AG04449 (cell line): ENCODE measurements at regions of chr1 and their contacts with region 1.

Region 1: DNA sequence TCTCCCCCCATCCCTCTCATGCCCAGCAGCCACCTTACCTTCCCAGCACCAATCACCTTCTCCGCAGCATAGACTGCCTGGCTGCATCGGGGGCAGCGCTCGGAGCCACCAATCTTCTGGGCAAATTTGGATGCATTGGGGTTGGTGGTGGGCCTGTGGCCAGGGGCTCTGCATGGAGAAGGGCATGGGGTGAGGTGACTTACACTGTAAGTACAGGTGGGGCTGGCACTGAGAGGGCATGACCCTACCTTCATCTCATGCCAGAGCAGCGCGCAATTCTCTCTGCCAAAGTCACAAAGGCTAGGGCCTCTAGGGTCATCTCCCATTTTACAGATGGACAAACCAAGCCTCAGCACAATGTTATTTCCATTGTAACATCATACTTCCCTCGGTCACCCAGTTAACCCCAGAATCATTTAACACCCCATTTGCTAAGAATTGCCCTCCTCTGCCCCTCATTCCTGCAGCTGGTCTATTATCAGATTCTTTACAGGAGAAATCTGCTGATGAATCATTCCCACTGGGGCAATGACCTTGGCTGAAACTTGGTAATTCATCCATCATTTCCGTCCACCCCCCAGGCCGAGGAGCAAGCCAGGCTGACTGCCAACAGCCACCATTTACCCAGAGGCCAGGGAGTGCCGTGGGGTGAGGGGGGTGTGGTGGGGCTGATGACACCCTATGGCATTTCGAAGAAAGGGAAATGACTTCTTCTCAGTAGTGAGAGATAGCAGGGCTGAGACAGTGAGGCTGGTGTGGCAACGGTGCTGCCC is 17.9 kb downstream of the CSRP1 start:
- DNase-seq: peak; percentile 79
- H3K4me3 ChIP-seq: no peak overlapping the region
- CTCF ChIP-seq: no peak

Region 2: DNA sequence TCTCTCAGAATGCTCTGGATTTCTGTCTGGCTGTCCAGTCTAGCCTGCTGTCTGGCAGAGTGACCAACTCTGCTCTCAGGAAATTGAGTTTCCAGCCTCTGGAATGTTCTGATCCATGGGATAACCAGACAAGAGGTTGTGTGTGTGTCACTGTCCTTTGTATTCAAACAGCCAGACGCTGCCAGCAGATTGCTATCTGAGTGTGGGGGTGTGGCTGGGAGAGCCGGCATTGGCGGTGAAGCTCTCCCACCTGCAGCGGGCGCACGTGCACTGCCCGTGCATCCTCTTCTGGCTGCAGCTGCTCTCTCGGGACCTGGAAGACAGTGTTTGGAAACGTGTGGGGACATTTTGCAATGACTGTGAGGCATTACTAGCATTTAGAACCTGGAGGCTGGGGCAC is 179.6 kb before region 1 on chr1:
- CTCF ChIA-PET with region 1: no interaction called
- POLR2A ChIA-PET with region 1: no interaction called
- DNase-seq: no peak
- H3K4me3 ChIP-seq: no peak overlapping the region
- CTCF ChIP-seq: no peak

Region 3: DNA sequence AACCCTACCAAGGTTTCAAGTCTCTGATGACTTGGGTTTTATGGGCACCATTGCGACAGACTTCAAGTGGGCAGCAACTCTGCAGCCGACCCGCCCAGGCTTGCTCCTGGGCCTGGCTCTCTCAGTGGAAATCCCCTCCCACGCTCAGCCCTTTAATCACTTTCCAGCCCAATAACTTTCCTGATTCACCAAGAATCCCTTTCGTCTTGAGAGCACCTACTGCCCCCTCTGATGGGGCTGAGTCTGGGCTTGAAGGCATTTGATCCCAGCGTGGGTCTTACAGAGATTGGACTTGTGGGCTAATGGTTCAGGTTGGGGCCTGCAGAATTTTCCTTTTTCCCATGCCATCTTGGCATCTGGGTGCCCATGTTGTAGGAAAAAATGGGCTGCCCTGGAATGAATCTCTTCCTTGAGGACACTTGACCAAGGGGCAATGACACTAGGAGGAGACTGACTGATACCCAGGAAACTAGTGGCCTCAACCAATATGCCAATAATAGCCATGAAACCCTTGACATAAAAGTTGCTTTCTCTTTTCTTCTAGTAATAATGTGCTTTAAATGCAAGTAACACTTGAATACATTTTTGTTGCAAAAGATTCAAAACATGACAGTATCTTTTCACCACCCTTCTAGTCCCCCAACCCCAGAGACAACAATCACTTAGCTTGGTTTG is 12.2 kb before region 1 on chr1:
- CTCF ChIA-PET with region 1: interaction called, 1,139 read pairs
- POLR2A ChIA-PET with region 1: interaction called, 4 read pairs
- DNase-seq: no peak
- H3K4me3 ChIP-seq: no peak overlapping the region
- CTCF ChIP-seq: no peak

Region 4: GRCh38 chr1:201500670-201501120 is 11.7 kb after region 1 on chr1:
- CTCF ChIA-PET with region 1: interaction called, 1,139 read pairs
- POLR2A ChIA-PET with region 1: interaction called, 11 read pairs
- DNase-seq: no peak
- H3K4me3 ChIP-seq: no peak overlapping the region
- CTCF ChIP-seq: no peak

Region 5: GRCh38 chr1:201859424-201859823 is 370.4 kb after region 1 on chr1:
- CTCF ChIA-PET with region 1: no interaction called
- POLR2A ChIA-PET with region 1: no interaction called
- DNase-seq: no peak
- H3K4me3 ChIP-seq: no peak overlapping the region
- CTCF ChIP-seq: no peak